BJ (cell line): ENCODE measurements at regions of chr5 and their contacts with region 1.

Region 1: GRCh38 chr5:107437986-107438520 is 232.7 kb downstream of the EFNA5 start:
- DNase-seq: no peak
- H3K4me3 ChIP-seq: no peak overlapping the region
- H3K27me3 ChIP-seq: no peaks in the 10 kb centered on the region; the same call in 1 of the 2 replicates
- CTCF ChIP-seq: no peak

Region 2: GRCh38 chr5:107425541-107426256 is 12.4 kb before region 1 on chr5:
- CTCF ChIA-PET with region 1: interaction called, 5 read pairs
- POLR2A ChIA-PET with region 1: interaction called, 14 read pairs
- DNase-seq: peak; percentile 73
- H3K4me3 ChIP-seq: no peak overlapping the region
- H3K27me3 ChIP-seq: no peaks in the 10 kb centered on the region
- CTCF ChIP-seq: no peak

Region 3: DNA sequence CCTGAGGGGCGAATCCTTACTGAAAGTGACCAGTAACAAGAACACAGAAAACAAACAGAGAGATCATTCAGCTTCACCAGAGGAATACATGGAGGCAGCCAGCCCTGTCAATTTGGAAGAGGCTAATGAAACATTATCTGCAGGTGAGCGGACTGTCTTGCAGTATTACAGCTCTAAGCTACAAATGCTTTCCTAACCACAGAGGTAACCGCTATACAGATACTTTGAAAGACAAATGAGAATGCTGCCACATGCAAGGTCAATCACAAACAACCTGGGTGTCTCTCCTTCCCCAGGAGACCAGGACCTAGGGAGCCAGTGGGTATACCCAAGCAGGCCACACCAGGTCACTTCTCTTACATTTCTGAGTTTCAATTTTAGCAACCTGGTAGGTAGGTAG is 202.5 kb after region 1 on chr5:
- CTCF ChIA-PET with region 1: no interaction called
- POLR2A ChIA-PET with region 1: no interaction called
- DNase-seq: no peak
- H3K4me3 ChIP-seq: no peak overlapping the region
- H3K27me3 ChIP-seq: no peaks in the 10 kb centered on the region
- CTCF ChIP-seq: no peak